ENCODE measurements at regions of chr17 and their contacts with region 1.

Region 1: GRCh38 chr17:77287432-77288071 is 146.8 kb downstream of the SEC14L1 start:
- DNase-seq: peak; percentile 97
- H3K4me3 Mint-ChIP-seq: peak overlapping the region; percentile 75
- H3K27ac Mint-ChIP-seq: peak overlapping the region; percentile 100
- H3K4me1 Mint-ChIP-seq: peaks cover 53% of the 10 kb centered on the region
- H3K27me3 Mint-ChIP-seq: no peaks in the 10 kb centered on the region
- CTCF ChIP-seq: no peak

Region 2: GRCh38 chr17:77088455-77089123 is 199.0 kb before region 1 on chr17:
- CTCF ChIA-PET with region 1: interaction called, 4 read pairs
- POLR2A ChIA-PET with region 1: interaction called, 23 read pairs
- intact Hi-C with region 1: no loop called
- DNase-seq: peak; percentile 93
- H3K4me3 Mint-ChIP-seq: peak overlapping the region; percentile 97
- H3K27ac Mint-ChIP-seq: peak overlapping the region; percentile 99
- H3K4me1 Mint-ChIP-seq: peaks cover 17% of the 10 kb centered on the region
- H3K27me3 Mint-ChIP-seq: no peaks in the 10 kb centered on the region
- CTCF ChIP-seq: peak; percentile 22

Region 3: GRCh38 chr17:77254951-77255825 is 32.4 kb before region 1 on chr17:
- CTCF ChIA-PET with region 1: interaction called, 4 read pairs
- POLR2A ChIA-PET with region 1: interaction called, 82 read pairs
- intact Hi-C with region 1: no loop called
- DNase-seq: peak; percentile 94
- H3K4me3 Mint-ChIP-seq: no peak overlapping the region
- H3K27ac Mint-ChIP-seq: peak overlapping the region; percentile 99
- H3K4me1 Mint-ChIP-seq: peaks cover 13% of the 10 kb centered on the region
- H3K27me3 Mint-ChIP-seq: no peaks in the 10 kb centered on the region
- CTCF ChIP-seq: no peak

Region 4: DNA sequence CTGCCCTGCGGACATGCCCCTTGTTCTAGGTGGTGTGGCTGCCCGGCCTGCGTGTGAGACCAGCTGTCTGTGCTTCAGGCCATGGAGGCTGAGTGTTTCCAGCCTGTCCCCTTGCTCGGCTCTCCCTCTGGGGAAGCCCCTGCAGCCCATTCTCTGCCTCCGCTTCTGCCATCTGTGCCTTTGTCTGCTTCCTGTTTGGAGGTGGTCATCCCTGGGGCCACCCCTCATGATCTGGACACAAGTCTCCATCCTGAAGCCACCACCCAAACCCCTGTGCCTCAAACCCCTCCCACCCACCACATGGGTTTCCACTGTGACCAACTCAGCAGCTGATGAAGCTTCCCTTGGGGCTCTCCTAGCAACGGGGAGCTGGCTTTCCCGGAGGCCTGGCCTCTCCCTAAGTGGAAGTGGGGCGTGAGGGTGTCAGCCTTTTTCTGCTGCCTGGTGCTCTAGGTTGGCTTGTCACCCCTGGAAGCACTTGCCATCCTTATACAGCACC is 38.1 kb after region 1 on chr17:
- CTCF ChIA-PET with region 1: interaction called, 6 read pairs
- POLR2A ChIA-PET with region 1: interaction called, 443 read pairs
- intact Hi-C with region 1: loop called (anchors 1 kb)
- DNase-seq: no peak
- H3K4me3 Mint-ChIP-seq: peak overlapping the region; percentile 88
- H3K27ac Mint-ChIP-seq: peak overlapping the region; percentile 95
- H3K4me1 Mint-ChIP-seq: peaks cover 49% of the 10 kb centered on the region
- H3K27me3 Mint-ChIP-seq: no peaks in the 10 kb centered on the region
- CTCF ChIP-seq: no peak

Region 5: GRCh38 chr17:77420804-77421629 is 133.5 kb after region 1 on chr17:
- CTCF ChIA-PET with region 1: no interaction called
- POLR2A ChIA-PET with region 1: interaction called, 28 read pairs
- intact Hi-C with region 1: loop called (anchors 2 kb)
- DNase-seq: peak; percentile 82
- H3K4me3 Mint-ChIP-seq: peak overlapping the region; percentile 25
- H3K27ac Mint-ChIP-seq: peak overlapping the region; percentile 22
- H3K4me1 Mint-ChIP-seq: peaks cover 34% of the 10 kb centered on the region
- H3K27me3 Mint-ChIP-seq: no peaks in the 10 kb centered on the region
- CTCF ChIP-seq: no peak

Measured in MCF 10A (cell line).